PC-9 (cell line): ENCODE measurements at regions of chr1 and their contacts with region 1.

Region 1: DNA sequence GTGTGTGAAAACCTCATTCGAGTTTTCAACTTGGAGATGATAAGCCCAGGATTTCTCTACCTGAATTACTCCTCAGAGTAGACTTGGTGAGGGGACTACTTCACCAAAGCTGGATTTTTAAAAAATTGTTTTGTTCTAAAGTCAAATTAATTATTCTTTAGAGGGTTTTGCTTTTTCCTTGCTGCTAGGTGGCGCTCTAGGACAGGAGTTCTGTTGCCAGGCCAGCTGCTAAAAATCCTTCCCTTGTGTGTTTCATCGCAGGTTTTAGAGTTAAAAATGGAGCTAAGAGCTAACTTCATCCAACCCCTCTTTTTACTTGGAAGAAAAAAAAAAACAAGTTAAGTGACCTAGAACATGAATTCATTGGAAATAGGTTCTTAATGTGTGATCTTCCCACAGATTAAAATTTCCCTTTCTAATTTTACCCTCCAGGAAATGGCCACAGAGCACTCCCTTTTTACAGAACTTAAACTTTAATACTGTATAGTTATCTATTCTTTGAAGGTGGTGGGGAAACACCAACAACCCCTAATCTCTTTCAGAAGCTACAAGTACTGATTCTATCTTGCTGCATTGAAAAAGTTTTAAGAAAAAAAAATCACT is 36.7 kb upstream of the FAM163A start:
- DNase-seq: peak in 1 of 2 experiments; percentile 46
- H3K4me3 ChIP-seq: no peak overlapping the region
- H3K27ac ChIP-seq: no peak overlapping the region
- H3K4me1 ChIP-seq: no peaks in the 10 kb centered on the region
- H3K27me3 ChIP-seq: peaks cover 14% of the 10 kb centered on the region
- CTCF ChIP-seq: peak; percentile 93

Region 2: GRCh38 chr1:179744401-179745130 is 38.1 kb after region 1 on chr1:
- CTCF ChIA-PET with region 1: no interaction called
- POLR2A ChIA-PET with region 1: no interaction called
- intact Hi-C with region 1: no loop called
- DNase-seq: no peak
- H3K4me3 ChIP-seq: no peak overlapping the region
- H3K27ac ChIP-seq: no peak overlapping the region
- H3K4me1 ChIP-seq: no peaks in the 10 kb centered on the region
- H3K27me3 ChIP-seq: 0 out of 2 replicates have a peak, but pooled peaks cover 15% of the 10 kb centered on the region
- CTCF ChIP-seq: no peak

Region 3: DNA sequence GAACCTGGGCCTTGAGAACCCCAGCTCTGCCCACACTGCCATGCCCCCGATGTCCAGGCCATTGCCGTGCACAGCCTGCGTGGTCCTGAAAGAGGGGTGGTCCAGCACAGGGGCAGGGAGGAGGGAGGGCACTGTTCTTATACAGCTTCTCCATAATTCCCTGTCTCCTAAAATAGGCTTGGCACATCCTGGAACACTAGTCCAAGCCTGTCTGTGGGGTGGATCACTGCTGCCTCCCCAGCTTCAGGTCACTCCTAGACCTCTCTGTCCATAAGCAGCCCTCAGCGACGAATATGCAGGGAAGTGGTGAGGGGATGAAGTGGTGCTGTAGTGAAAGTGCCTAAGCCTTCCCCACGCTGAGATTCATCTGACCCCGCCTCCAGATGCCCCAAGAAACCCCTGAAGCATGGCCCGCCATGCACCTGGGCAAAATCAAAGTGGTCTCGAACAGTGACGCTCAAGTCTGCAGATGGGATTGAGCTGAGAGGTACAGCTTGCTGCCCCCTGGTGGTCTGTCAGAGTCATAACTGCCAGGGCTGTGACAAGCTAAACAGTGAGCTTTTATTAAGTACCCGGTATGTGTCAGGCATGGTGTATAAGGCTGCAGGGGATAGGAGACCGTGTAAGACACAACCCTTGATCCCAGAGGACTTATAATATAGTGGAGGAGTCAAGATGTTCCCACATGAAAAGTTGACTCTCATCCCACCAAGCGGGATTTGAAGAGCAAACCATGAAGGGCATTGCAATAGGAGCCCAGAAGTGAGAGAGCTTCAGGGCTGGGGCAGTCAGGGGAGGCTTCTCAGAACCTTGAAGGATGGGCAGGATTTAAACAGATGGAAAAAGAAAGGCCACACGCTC is 103.3 kb after region 1 on chr1:
- CTCF ChIA-PET with region 1: interaction called, 23 read pairs
- POLR2A ChIA-PET with region 1: no interaction called
- intact Hi-C with region 1: loop called (anchors 1 kb)
- DNase-seq: peak; percentile 46 to 53
- H3K4me3 ChIP-seq: no peak overlapping the region
- H3K27ac ChIP-seq: no peak overlapping the region
- H3K4me1 ChIP-seq: no peaks in the 10 kb centered on the region
- H3K27me3 ChIP-seq: peaks cover 46% of the 10 kb centered on the region
- CTCF ChIP-seq: peak; percentile 93

Region 4: DNA sequence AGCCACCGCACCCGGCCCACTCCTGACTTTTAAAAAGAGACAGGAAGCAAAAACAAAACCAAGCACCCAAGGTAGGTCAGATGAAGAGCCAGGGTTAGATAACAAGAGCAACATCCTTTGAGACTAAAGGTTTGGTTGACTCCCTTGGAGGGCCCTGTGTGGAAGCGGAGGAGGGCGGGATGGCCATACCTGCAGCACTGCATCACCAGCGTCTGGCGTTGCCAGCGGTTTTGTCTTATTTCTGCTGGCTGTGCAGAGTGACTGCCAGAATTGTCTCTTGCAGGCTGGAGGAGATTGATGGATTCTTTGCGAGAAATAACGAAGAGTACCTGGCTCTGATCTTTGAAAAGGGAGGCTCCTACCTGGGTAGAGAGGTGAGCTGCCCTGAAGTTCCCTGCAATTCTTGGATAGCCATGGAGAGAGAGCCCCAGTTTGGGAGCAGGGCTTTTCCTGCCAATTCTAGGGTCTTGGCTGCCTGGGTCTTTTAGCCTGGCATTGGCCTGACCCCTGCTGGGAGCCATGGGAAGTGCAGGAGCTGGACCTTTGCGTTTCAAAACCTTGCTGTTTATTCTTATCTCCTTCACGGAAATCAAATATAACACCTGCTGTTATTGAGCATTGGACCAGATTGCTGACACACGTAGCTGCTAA is 472.2 kb after region 1 on chr1:
- CTCF ChIA-PET with region 1: interaction called, 3 read pairs
- POLR2A ChIA-PET with region 1: no interaction called
- intact Hi-C with region 1: loop called (anchors 2 kb)
- DNase-seq: peak in 1 of 2 experiments; percentile 61
- H3K4me3 ChIP-seq: no peak overlapping the region
- H3K27ac ChIP-seq: no peak overlapping the region
- H3K4me1 ChIP-seq: no peaks in the 10 kb centered on the region
- H3K27me3 ChIP-seq: no peaks in the 10 kb centered on the region
- CTCF ChIP-seq: peak; percentile 99

Region 5: GRCh38 chr1:180415985-180416633 is 709.7 kb after region 1 on chr1:
- CTCF ChIA-PET with region 1: no interaction called
- POLR2A ChIA-PET with region 1: no interaction called
- intact Hi-C with region 1: loop called (anchors 10 kb)
- DNase-seq: no peak
- H3K4me3 ChIP-seq: no peak overlapping the region
- H3K27ac ChIP-seq: no peak overlapping the region
- H3K4me1 ChIP-seq: no peaks in the 10 kb centered on the region
- H3K27me3 ChIP-seq: no peaks in the 10 kb centered on the region
- CTCF ChIP-seq: peak; percentile 82

Region 6: DNA sequence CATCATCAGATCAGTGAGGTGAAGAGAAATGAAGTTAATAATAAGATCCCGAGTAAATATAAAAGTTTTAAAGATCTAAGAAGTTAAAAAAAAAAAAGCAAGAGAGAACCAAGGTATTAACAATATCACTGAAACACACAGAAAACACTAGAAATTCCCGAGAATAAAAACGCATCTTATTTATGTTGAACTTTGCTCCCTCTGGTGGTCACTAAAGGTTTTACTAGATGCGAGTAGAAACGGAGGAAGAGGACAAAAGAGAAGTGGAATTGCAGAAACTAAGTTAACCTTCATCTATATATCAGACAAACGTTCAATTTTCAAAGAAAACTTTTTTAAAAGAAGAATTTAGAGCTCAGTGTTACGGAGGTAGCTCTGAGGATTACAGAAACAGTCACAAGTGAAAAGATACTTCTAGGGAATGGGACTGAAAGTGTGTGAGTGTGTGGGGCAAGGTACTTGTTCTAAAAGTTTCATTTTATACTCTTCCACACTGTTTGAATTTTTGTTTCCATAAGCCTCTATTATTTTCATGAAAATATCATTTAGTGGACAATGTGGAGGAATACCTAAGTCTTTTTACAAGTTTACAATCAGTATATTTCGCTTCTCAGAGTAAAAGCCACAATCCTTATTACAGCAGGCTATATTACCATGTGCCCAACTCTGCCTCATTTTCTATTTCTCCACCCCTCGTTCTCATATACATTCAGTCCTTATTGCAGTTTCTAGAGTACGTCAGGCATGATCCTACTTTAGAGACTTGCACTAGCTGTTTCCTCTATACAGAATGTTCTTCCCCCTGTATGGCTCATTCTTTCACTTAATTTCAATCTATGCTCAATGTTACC is 776.2 kb after region 1 on chr1:
- CTCF ChIA-PET with region 1: no interaction called
- POLR2A ChIA-PET with region 1: no interaction called
- intact Hi-C with region 1: loop called (anchors 1 kb)
- DNase-seq: peak in 1 of 2 experiments; percentile 45
- H3K4me3 ChIP-seq: no peak overlapping the region
- H3K27ac ChIP-seq: no peak overlapping the region
- H3K4me1 ChIP-seq: no peaks in the 10 kb centered on the region
- H3K27me3 ChIP-seq: no peaks in the 10 kb centered on the region
- CTCF ChIP-seq: peak; percentile 83

Region 7: GRCh38 chr1:180863158-180863775 is 1156.8 kb after region 1 on chr1:
- CTCF ChIA-PET with region 1: no interaction called
- POLR2A ChIA-PET with region 1: no interaction called
- intact Hi-C with region 1: loop called (anchors 10 kb)
- DNase-seq: peak; percentile 31 to 52
- H3K4me3 ChIP-seq: no peak overlapping the region
- H3K27ac ChIP-seq: no peak overlapping the region
- H3K4me1 ChIP-seq: no peaks in the 10 kb centered on the region
- H3K27me3 ChIP-seq: no peaks in the 10 kb centered on the region
- CTCF ChIP-seq: peak; percentile 91